B cell (primary cell): ENCODE measurements at regions of chr12 and their contacts with region 1.

Region 1: GRCh38 chr12:84502907-84503787 is 409.5 kb downstream of the SLC6A15 start:
- DNase-seq: peak; percentile 7
- ATAC-seq: no peak
- H3K4me3 ChIP-seq: no peak overlapping the region
- H3K4me3 Mint-ChIP-seq: no peak overlapping the region
- H3K27ac ChIP-seq: no peak overlapping the region
- H3K27ac Mint-ChIP-seq: no peak overlapping the region
- H3K4me1 ChIP-seq: no peaks in the 10 kb centered on the region
- H3K4me1 Mint-ChIP-seq: no peaks in the 10 kb centered on the region
- H3K27me3 ChIP-seq: no peaks in the 10 kb centered on the region
- H3K27me3 Mint-ChIP-seq: no peaks in the 10 kb centered on the region
- CTCF ChIP-seq: peak; percentile 14

Region 2: DNA sequence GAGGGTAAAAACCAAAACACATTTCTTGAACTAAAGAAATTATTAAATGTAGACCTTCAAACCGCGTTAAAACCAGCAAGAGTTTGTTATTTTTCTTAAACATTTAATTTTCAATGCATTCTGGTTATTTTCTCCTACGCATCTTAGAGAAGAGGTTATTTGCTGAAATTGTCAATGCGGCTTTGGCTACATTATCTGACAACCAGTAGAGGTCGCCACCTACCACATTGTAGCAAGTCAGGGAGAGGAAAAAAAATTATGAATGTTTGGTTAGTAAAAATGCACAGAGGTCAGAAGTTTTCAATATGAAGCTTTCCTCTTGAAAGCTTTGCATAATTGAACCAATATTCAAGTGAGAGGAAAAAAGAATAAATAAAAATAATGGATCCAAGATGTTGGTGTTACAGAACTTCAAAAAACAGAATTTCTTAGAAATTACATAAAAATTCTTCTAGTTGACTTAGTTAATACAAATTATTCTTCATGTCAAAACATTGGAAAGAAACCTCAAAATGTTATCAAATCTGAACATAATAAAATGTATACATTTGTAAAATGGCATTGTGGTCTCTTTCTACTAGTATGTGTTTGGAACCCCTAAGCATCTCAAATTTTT is 1975.9 kb before region 1 on chr12:
- CTCF ChIA-PET with region 1: no interaction called
- POLR2A ChIA-PET with region 1: no interaction called
- intact Hi-C with region 1: loop called (anchors 5 kb)
- DNase-seq: peak; percentile 20
- ATAC-seq: no peak
- H3K4me3 ChIP-seq: no peak overlapping the region
- H3K4me3 Mint-ChIP-seq: no peak overlapping the region
- H3K27ac ChIP-seq: no peak overlapping the region
- H3K27ac Mint-ChIP-seq: no peak overlapping the region
- H3K4me1 ChIP-seq: no peaks in the 10 kb centered on the region
- H3K4me1 Mint-ChIP-seq: no peaks in the 10 kb centered on the region
- H3K27me3 ChIP-seq: no peaks in the 10 kb centered on the region
- H3K27me3 Mint-ChIP-seq: no peaks in the 10 kb centered on the region
- CTCF ChIP-seq: peak; percentile 76

Region 3: DNA sequence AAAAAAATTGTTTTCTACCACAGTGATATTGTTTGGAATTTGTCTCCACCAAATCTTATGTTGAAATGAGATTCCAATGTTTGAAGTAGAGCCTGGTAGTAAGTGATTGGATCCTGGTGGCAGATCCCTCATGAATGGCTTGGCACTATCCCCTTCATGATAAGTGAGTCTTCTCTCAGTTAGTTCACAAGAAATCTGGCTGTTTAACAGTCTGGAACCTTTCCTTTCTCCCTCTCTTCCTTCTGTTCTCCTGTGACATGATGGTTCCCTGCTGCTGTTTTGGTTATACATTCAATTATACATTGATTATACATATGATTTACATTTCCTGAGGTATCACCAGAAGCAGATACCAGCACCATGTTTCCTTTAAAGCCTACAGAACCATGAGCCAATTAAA is 32.8 kb before region 1 on chr12:
- CTCF ChIA-PET with region 1: no interaction called
- POLR2A ChIA-PET with region 1: no interaction called
- intact Hi-C with region 1: no loop called
- DNase-seq: no peak
- ATAC-seq: no peak
- H3K4me3 ChIP-seq: no peak overlapping the region
- H3K4me3 Mint-ChIP-seq: no peak overlapping the region
- H3K27ac ChIP-seq: no peak overlapping the region
- H3K27ac Mint-ChIP-seq: no peak overlapping the region
- H3K4me1 ChIP-seq: no peaks in the 10 kb centered on the region
- H3K4me1 Mint-ChIP-seq: no peaks in the 10 kb centered on the region
- H3K27me3 ChIP-seq: no peaks in the 10 kb centered on the region
- H3K27me3 Mint-ChIP-seq: no peaks in the 10 kb centered on the region
- CTCF ChIP-seq: no peak